B cell (primary cell): ENCODE measurements at regions of chr2 and their contacts with region 1.

Region 1: GRCh38 chr2:236569573-236569973 is at the start of gene ACKR3:
- DNase-seq: peak; percentile 90
- ATAC-seq: peak; percentile 91
- H3K4me3 ChIP-seq: peak within 1 kb of the TSS; percentile 23 to 67 (median 55)
- H3K4me3 Mint-ChIP-seq: peak within 1 kb of the TSS; percentile 95
- H3K27ac ChIP-seq: peak within 1 kb of the TSS in 1 of 2 donors; percentile 62
- H3K27ac Mint-ChIP-seq: peak within 1 kb of the TSS; percentile 87
- H3K4me1 ChIP-seq: peaks cover 30 to 40% of the 10 kb centered on the region in 2 donors
- H3K4me1 Mint-ChIP-seq: peaks cover 44% of the 10 kb centered on the region
- H3K27me3 ChIP-seq: peaks cover 0 to 4% (median 0%) of the 10 kb centered on the region in 4 experiments
- H3K27me3 Mint-ChIP-seq: no peaks in the 10 kb centered on the region
- CTCF ChIP-seq: peak; percentile 63
- total RNA-seq, gene ACKR3: 5.9 and 7.1 TPM in 2 replicates

Region 2: DNA sequence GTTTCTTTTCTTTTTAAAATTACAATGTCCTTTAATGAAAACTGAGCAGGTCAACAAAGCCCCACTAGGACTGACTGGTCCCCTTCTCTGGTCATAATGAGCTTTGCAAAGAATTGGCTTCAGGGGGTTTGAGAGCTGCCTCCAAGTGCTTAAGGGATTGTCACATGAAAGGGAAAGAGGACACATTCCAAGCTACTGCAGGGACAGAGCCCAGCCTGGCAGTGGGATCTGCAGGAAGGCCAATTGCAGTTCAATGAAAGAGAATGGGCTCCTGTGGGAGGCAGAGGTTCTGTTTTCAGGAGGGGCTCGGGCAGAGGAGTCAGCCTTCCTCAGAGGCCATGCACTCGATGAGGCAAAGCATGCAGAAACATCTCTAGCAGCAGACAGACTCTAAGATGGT is 84.1 kb before region 1 on chr2:
- CTCF ChIA-PET with region 1: no interaction called
- POLR2A ChIA-PET with region 1: no interaction called
- intact Hi-C with region 1: no loop called
- DNase-seq: no peak
- ATAC-seq: no peak
- H3K4me3 ChIP-seq: no peak overlapping the region
- H3K4me3 Mint-ChIP-seq: no peak overlapping the region
- H3K27ac ChIP-seq: no peak overlapping the region
- H3K27ac Mint-ChIP-seq: no peak overlapping the region
- H3K4me1 ChIP-seq: no peaks in the 10 kb centered on the region
- H3K4me1 Mint-ChIP-seq: no peaks in the 10 kb centered on the region
- H3K27me3 ChIP-seq: peaks cover 0 to 5% (median 0%) of the 10 kb centered on the region in 4 experiments
- H3K27me3 Mint-ChIP-seq: peaks cover 9% of the 10 kb centered on the region
- CTCF ChIP-seq: no peak

Region 3: DNA sequence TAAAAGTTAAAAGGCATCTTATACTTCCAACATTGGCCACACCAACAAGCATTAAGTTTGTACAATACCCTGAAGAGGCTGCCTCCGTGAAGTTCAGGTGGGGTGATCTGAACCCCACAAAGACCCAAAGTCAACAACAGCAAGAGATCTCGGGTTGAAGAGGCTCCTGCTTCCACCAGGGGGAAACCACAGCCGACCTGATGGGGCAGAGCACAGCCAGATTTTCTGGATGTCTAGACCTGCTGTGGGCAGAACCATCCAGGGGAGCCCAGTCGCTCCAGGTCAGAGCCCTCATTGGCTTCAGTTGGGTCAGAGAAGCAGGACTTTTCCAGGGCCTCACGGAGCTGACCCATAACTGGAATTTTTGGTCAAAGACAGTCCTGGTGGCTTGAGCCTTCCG is 66.5 kb before region 1 on chr2:
- CTCF ChIA-PET with region 1: interaction called, 429 read pairs
- POLR2A ChIA-PET with region 1: no interaction called
- intact Hi-C with region 1: no loop called
- DNase-seq: peak; percentile 30
- ATAC-seq: peak; percentile 21
- H3K4me3 ChIP-seq: no peak overlapping the region
- H3K4me3 Mint-ChIP-seq: no peak overlapping the region
- H3K27ac ChIP-seq: no peak overlapping the region
- H3K27ac Mint-ChIP-seq: no peak overlapping the region
- H3K4me1 ChIP-seq: peaks cover 5 to 6% of the 10 kb centered on the region in 2 donors
- H3K4me1 Mint-ChIP-seq: peaks cover 8% of the 10 kb centered on the region
- H3K27me3 ChIP-seq: peaks cover 2 to 34% (median 11%) of the 10 kb centered on the region in 4 experiments
- H3K27me3 Mint-ChIP-seq: peaks cover 63% of the 10 kb centered on the region
- CTCF ChIP-seq: peak; percentile 26

Region 4: DNA sequence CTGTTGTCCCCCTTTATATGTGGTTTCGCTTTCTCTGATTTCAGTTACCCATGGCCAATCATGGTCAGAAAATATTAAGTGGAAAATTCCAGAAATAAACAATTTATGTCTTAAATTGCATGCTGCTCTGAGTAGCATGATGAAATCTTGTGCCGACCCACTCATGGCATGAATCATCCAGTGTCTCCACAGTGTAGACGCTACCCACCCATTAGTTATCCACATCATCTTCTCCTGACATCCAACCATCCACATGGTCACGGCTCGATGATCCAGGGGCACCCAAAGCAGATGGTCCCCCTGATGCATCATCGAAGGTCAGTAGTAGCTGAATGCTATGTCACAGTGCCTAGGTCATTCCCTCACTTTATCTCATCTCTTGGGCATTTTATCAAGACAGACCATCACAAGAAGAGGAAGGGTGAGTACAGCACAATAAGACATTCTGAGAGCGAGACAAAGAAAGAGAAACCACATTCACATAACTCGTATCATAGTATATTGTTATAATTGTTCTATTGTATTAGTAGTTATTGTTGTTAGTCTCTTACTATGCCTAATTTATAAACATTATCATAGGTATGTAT is 44.1 kb before region 1 on chr2:
- CTCF ChIA-PET with region 1: interaction called, 34 read pairs
- POLR2A ChIA-PET with region 1: no interaction called
- intact Hi-C with region 1: loop called (anchors 5 kb)
- DNase-seq: no peak
- ATAC-seq: no peak
- H3K4me3 ChIP-seq: no peak overlapping the region
- H3K4me3 Mint-ChIP-seq: no peak overlapping the region
- H3K27ac ChIP-seq: no peak overlapping the region
- H3K27ac Mint-ChIP-seq: no peak overlapping the region
- H3K4me1 ChIP-seq: no peaks in the 10 kb centered on the region
- H3K4me1 Mint-ChIP-seq: no peaks in the 10 kb centered on the region
- H3K27me3 ChIP-seq: peaks cover 0 to 2% (median under 1%) of the 10 kb centered on the region in 4 experiments
- H3K27me3 Mint-ChIP-seq: peaks cover 13% of the 10 kb centered on the region
- CTCF ChIP-seq: no peak

Region 5: GRCh38 chr2:236545814-236546480 is 23.6 kb before region 1 on chr2:
- CTCF ChIA-PET with region 1: interaction called, 77 read pairs
- POLR2A ChIA-PET with region 1: interaction called, 12 read pairs
- intact Hi-C with region 1: loop called (anchors 1 kb)
- DNase-seq: peak; percentile 79
- ATAC-seq: peak; percentile 69
- H3K4me3 ChIP-seq: peak overlapping the region in 4 of 5 experiments; percentile 14 to 63 (median 36)
- H3K4me3 Mint-ChIP-seq: peak overlapping the region; percentile 82
- H3K27ac ChIP-seq: peak overlapping the region; percentile 88
- H3K27ac Mint-ChIP-seq: peak overlapping the region; percentile 99
- H3K4me1 ChIP-seq: peaks cover 66 to 69% of the 10 kb centered on the region in 2 donors
- H3K4me1 Mint-ChIP-seq: peaks cover 78% of the 10 kb centered on the region
- H3K27me3 ChIP-seq: no peaks in the 10 kb centered on the region
- H3K27me3 Mint-ChIP-seq: no peaks in the 10 kb centered on the region
- CTCF ChIP-seq: no peak

Region 6: DNA sequence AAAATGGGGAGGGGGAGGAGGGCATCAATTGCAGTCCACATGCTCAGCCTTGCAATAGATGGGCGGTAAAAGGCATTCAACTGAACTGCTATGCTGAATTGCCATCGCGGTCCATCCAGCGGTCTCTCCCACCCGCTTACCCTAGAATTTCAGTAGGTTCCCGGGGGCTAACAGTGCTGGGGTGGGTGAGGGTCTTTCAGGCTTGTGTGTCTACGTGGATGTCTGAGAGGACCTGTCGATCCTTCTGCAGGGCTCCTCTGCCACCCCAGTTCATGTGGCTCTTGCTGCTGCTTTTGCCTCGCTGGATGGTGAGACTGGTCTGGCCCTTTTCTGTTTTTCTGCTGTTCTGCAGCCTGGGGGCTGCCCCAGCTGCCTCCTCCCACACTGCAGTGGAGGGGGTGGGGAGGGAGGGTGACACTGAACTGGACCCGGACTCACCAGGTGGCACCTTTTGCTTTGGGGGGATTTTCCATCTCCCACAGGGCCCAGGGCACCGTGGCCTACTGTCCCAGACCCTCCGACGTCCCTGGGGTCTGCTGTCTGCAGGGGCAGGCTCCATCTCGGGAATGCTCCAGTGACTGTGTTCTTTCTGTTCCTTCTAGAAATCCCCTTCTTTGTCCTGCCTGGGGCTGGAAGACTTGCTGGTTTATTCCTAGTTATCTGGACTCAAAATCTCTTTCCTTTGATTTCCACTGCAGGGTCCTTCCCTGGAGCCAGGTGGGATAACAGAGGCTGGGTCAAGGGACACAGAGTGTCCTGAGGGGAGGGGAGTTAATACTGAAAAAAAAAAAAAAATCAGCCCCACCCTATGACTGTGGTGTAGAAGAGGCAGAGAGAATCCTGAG is 14.3 kb after region 1 on chr2:
- CTCF ChIA-PET with region 1: interaction called, 10 read pairs
- POLR2A ChIA-PET with region 1: no interaction called
- intact Hi-C with region 1: no loop called
- DNase-seq: no peak
- ATAC-seq: peak; percentile 17
- H3K4me3 ChIP-seq: no peak overlapping the region
- H3K4me3 Mint-ChIP-seq: no peak overlapping the region
- H3K27ac ChIP-seq: no peak overlapping the region
- H3K27ac Mint-ChIP-seq: no peak overlapping the region
- H3K4me1 ChIP-seq: no peaks in the 10 kb centered on the region
- H3K4me1 Mint-ChIP-seq: peaks cover 7% of the 10 kb centered on the region
- H3K27me3 ChIP-seq: no peaks in the 10 kb centered on the region
- H3K27me3 Mint-ChIP-seq: no peaks in the 10 kb centered on the region
- CTCF ChIP-seq: no peak

Region 7: DNA sequence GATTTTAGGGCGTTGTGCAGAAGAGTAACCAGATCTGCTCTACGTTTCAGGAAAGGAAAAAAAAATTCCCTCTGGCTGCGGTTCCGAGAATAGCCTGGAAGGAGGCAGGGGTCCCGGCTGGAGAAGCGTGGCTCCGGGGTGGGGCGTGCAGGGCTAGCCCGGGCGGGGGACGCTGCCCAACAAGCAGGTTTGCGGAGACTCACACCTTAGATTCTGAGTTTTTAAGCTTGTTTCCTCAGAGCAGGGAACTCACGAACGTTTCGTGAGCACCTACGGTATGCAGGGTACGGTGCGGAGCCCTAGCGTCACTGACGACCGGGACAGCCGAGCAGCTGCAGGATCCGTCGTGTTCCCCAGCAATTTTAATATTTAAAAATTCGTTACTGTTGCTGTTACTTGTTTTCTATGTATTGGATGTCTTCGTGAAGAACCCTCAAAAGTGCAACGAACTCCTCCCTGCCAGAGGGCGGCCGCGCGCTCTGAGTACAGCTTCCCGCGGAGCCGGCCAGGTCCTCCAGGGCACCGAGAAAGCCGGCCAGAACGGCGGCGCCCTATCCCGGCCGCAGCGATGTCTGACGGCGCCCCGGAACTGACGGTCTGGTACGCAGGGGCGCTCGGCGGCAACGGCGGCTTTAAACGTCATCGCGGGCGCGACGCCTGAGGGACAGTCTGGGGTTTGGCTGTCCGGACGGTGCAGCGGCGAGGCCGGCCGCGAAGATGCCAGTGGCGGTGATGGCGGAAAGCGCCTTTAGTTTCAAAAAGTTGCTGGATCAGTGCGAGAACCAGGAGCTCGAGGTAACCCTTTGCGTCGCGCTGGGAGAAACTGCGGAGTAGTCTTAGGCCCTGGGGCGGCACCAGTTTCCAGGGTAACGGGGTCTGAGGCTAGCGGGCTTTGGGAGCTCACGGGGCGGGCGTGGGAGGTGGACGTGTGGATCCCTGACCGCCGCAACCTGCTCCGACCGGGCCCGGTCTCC is 516.0 kb after region 1 on chr2 and contains the start of gene COPS8:
- CTCF ChIA-PET with region 1: interaction called, 14 read pairs
- POLR2A ChIA-PET with region 1: no interaction called
- intact Hi-C with region 1: loop called (anchors 10 kb)
- DNase-seq: peak; percentile 92
- ATAC-seq: peak; percentile 99
- H3K4me3 ChIP-seq: peak within 1 kb of the TSS; percentile 78 to 92 (median 84)
- H3K4me3 Mint-ChIP-seq: peak within 1 kb of the TSS; percentile 96
- H3K27ac ChIP-seq: peak within 1 kb of the TSS; percentile 59 to 90
- H3K27ac Mint-ChIP-seq: peak within 1 kb of the TSS; percentile 94
- H3K4me1 ChIP-seq: peaks cover 11 to 12% of the 10 kb centered on the region in 2 donors
- H3K4me1 Mint-ChIP-seq: peaks cover 16% of the 10 kb centered on the region
- H3K27me3 ChIP-seq: no peaks in the 10 kb centered on the region
- H3K27me3 Mint-ChIP-seq: no peaks in the 10 kb centered on the region
- CTCF ChIP-seq: peak; percentile 18
- total RNA-seq, gene COPS8: 32.7 and 34.2 TPM in 2 replicates